Activated CD4-positive, alpha-beta T cell treated with anti-CD3 and anti-CD28 coated beads for 36 hours (primary cell): ENCODE measurements at regions of chr1 and their contacts with region 1.

Region 1: DNA sequence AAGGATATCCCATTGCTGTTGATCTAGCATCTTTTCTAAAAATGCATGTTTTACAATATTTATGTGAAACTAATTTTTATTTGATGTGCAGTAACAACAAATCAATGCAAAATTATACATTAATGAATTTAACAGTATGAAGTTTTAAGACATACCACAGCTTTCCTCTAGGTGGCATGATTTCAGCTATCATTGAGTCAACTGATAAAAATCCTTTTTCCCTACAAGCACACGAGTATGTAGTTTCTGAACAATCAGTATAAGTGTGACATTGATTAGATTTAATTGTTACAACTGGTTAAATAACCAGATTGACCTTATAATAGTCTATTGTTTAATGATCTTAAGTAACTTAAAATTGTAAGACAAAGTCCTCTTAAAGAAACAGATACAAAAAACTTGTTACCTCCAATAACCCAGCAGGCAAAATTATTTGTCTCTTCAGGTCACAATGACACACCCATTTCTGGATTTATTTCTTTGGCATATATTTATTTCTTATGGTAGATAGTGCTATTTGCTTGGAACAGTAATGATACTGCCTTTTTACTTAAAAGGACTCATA is 5.8 kb upstream of the TGFB2 start:
- DNase-seq: no peak
- ATAC-seq: no peak
- H3K4me3 Mint-ChIP-seq: no peak overlapping the region
- H3K27ac Mint-ChIP-seq: no peak overlapping the region
- H3K4me1 Mint-ChIP-seq: no peaks in the 10 kb centered on the region
- H3K27me3 Mint-ChIP-seq: peaks cover 12% of the 10 kb centered on the region

Region 2: GRCh38 chr1:218521375-218522169 is 182.2 kb after region 1 on chr1:
- CTCF ChIA-PET with region 1: interaction called, 3 read pairs
- POLR2A ChIA-PET with region 1: no interaction called
- intact Hi-C with region 1: loop called (anchors 1 kb)
- DNase-seq: peak; percentile 64
- ATAC-seq: no peak
- H3K4me3 Mint-ChIP-seq: no peak overlapping the region
- H3K27ac Mint-ChIP-seq: no peak overlapping the region
- H3K4me1 Mint-ChIP-seq: no peaks in the 10 kb centered on the region
- H3K27me3 Mint-ChIP-seq: peaks cover 16% of the 10 kb centered on the region

Region 3: DNA sequence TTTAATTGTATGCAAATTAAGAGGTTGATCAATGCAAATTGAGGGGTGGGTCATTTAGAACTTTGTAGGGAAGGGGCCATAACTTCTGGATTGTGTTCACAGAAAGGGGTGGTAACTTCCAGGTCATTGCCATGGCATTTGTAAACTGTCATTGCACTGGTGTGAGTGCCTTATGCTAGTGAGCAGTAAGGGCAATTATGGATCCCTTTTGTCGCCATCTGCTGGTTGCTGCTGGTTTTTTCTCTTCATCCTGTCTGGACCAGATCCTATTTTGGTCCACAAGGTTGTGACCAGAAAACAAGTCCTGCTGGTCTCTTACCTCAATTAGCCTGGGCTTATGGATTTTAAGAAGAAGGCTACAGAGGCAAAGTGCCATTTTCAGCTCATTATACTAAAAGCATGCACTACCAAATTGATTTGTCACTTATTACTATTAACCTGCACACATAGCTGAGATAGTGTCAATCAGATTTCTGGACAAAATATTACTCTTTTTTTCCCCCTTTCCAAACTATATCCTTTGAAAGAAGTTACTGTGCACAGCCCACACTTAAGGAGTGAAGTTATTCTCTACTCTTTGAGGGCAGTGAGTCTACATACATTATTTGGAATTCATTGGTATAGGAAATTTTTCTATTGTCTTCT is 1077.4 kb after region 1 on chr1:
- CTCF ChIA-PET with region 1: no interaction called
- POLR2A ChIA-PET with region 1: no interaction called
- intact Hi-C with region 1: loop called in 1 of 2 experiments (anchors 2 kb)
- DNase-seq: peak; percentile 78
- ATAC-seq: peak; percentile 72
- H3K4me3 Mint-ChIP-seq: no peak overlapping the region
- H3K27ac Mint-ChIP-seq: no peak overlapping the region
- H3K4me1 Mint-ChIP-seq: no peaks in the 10 kb centered on the region
- H3K27me3 Mint-ChIP-seq: peaks cover 4% of the 10 kb centered on the region